Ascending aorta (tissue), 2 donors: ENCODE measurements at regions of chr6 and their contacts with region 1.

Region 1: GRCh38 chr6:163413345-163414116 is 987 bp upstream of the QKI start:
- DNase-seq: peak; percentile 44 to 91
- H3K4me3 ChIP-seq: peak overlapping the region; percentile 98 to 100
- H3K27ac ChIP-seq: peak overlapping the region; percentile 98 to 100
- H3K4me1 ChIP-seq: peaks cover 0 to under 1% of the 10 kb centered on the region in 2 donors
- H3K27me3 ChIP-seq: no peaks in the 10 kb centered on the region
- CTCF ChIP-seq: peak in 1 of 3 experiments; percentile 4

Region 2: GRCh38 chr6:162306616-162307015 is 1106.9 kb before region 1 on chr6:
- intact Hi-C with region 1: no loop called
- DNase-seq: no peak
- H3K4me3 ChIP-seq: no peak overlapping the region
- H3K27ac ChIP-seq: no peak overlapping the region
- H3K4me1 ChIP-seq: no peaks in the 10 kb centered on the region
- H3K27me3 ChIP-seq: no peaks in the 10 kb centered on the region
- CTCF ChIP-seq: no peak

Region 3: GRCh38 chr6:162727309-162728182 is 686.0 kb before region 1 on chr6 and contains the starts of genes PACRG and PRKN:
- intact Hi-C with region 1: loop called (anchors 10 kb)
- DNase-seq: peak; percentile 94 to 100
- H3K4me3 ChIP-seq: peak within 1 kb of the TSS; percentile 74 to 100
- H3K27ac ChIP-seq: peak within 1 kb of the TSS; percentile 76 to 77
- H3K4me1 ChIP-seq: peaks cover 0 to 3% of the 10 kb centered on the region in 2 donors
- H3K27me3 ChIP-seq: no peaks in the 10 kb centered on the region
- CTCF ChIP-seq: no peak
- total RNA-seq, gene PACRG: not detected
- total RNA-seq, gene PRKN: 2.6 TPM

Region 4: DNA sequence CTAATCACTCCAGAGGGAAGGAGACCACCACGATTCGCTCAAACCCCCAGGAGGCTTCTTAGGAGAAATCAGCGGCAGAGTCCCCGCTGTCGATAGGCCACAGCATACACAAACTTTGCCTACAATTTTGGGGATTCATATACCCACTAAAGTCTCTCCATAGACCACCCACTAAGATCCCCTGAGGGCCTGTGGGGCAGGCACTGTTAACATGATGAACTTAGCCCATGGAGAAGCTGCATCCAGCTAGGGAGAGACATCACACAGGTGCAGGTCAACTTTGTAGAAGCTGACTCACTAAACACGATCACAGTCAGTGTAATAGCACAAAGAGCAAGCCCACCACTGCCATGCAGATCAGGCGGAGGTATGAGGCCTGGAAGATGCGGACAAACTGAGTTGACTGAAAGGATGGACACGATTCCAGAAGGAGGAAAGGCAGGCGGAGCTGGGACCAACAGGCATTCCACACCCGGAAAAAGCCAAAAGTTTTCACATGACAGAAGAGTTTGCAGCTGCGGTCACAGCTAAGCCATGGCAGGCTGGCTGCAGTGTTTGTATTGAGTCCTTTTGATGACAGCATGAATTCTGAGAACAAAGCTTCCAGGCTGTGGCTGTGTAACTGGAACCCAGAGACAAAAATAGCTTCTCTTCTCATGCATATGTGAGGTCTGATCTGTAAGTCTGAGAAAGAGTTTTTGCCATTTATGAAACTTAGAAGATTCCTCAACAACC is 74.7 kb before region 1 on chr6:
- intact Hi-C with region 1: loop called (anchors 2 kb)
- DNase-seq: no peak
- H3K4me3 ChIP-seq: no peak overlapping the region
- H3K27ac ChIP-seq: peak overlapping the region; percentile 1 to 30
- H3K4me1 ChIP-seq: peaks cover 3 to 13% of the 10 kb centered on the region in 2 donors
- H3K27me3 ChIP-seq: no peaks in the 10 kb centered on the region
- CTCF ChIP-seq: no peak

Region 5: DNA sequence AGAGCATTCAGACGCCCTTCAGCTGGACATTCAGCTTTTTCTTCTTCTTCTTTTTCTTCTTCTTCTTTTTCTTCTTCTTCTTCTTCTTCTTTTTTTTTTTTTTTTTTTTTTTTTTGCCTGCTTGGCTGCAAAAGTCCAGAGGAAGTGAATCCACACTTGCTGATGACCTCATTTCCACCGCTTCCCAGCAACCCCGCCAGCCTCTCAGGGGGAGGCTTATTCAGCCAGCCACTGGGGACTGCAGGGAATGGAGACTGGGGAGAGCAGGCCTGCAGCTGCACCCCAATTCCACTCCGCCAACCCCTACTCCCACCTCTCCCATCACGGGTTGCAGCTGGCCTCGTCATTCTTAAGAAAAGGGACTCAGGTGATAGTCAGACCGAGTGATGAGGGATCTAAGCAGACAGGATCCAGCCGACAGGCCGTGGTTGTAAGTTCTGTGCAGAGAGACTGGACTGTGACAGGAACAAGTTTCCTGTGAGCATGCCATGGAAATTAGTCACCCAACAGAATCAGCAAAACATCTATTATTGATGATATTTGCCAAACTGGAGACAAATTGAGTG is 58.0 kb before region 1 on chr6:
- intact Hi-C with region 1: loop called (anchors 5 kb)
- DNase-seq: peak in 1 of 2 donors; percentile 78
- H3K4me3 ChIP-seq: peak overlapping the region in 1 of 2 donors; percentile 38
- H3K27ac ChIP-seq: peak overlapping the region; percentile 51 to 59
- H3K4me1 ChIP-seq: peaks cover 0 to 6% of the 10 kb centered on the region in 2 donors
- H3K27me3 ChIP-seq: no peaks in the 10 kb centered on the region
- CTCF ChIP-seq: no peak

Region 6: DNA sequence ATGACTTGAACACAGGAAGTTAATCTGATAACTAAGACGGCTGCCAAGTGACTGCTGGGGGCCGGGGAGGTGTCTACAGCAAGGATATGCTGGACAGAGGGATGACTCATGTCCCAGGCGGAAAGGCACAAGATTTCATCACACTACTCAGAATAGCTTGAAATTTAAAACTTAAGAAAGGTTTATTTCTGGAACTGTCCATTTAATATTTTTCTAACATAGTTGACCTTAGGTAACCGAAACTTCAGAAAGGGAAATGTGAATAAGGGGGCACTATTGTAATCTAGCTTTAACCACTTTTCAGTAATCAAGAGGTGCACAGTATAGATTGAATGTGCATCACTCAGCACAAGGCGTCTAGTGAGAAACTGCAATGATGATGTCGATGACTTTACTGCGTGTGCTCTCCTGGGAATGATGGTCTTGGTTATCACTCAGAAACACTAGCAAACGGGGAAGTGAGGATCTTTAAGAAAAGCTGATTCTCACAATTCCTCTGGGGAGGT is 172.5 kb after region 1 on chr6:
- intact Hi-C with region 1: loop called (anchors 5 kb)
- DNase-seq: peak in 1 of 2 donors; percentile 82
- H3K4me3 ChIP-seq: no peak overlapping the region
- H3K27ac ChIP-seq: no peak overlapping the region
- H3K4me1 ChIP-seq: peaks cover 4 to 5% of the 10 kb centered on the region in 2 donors
- H3K27me3 ChIP-seq: no peaks in the 10 kb centered on the region
- CTCF ChIP-seq: no peak

Region 7: GRCh38 chr6:163956571-163957407 is 543.3 kb after region 1 on chr6:
- intact Hi-C with region 1: loop called (anchors 5 kb)
- DNase-seq: peak; percentile 43 to 84
- H3K4me3 ChIP-seq: no peak overlapping the region
- H3K27ac ChIP-seq: no peak overlapping the region
- H3K4me1 ChIP-seq: no peaks in the 10 kb centered on the region
- H3K27me3 ChIP-seq: no peaks in the 10 kb centered on the region
- CTCF ChIP-seq: peak; percentile 71 to 81 (median 80)

Region 8: DNA sequence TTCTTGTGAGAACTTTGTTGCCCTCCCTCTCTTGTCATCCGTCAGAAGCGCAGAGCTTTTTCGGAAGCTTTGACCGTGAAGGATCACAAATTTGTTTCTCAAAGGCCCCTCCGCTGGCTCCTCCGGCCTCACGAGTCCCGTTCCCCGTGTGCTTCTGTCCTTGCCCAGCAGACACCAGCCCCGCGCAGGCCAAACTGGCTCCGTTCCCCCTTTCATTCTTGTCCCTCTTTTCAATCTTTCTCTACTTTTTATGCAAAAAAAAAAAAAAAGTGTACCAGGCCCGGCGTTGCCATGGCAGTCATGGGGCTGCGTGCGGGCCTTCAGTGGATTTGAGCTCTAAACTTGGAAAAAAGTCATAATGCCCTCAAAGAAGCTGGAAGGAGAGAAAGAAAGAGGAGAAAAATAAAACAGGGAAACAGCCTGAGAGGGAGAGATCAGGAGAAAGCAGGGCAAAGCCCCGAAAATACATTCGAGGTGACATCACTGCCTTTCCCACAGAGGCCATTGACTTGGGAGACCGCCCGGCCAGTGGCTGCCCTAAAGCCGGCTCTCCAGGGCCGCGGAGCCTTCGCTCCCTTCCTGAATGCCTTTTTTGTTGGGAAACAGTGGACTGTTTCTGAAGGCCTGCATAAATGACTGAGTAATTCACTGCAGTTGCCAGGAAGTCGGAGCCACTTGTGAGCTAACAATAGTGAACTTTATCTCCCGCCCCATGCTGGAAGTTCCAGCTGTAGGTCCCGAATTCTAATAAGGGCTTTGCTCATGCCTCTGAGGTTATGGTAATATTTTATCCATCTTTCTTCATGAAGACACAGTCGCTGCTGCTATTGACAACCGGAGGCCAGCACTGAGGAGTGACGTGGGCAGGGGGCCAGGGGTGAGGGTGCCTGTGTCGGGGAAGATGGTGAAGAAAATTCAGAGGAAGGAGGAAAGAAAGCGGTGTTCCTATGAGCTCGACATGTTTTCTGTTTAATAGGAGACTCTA is 671.9 kb after region 1 on chr6:
- intact Hi-C with region 1: loop called (anchors 2 kb)
- DNase-seq: peak; percentile 53 to 91
- H3K4me3 ChIP-seq: peak overlapping the region in 1 of 2 donors; percentile 62
- H3K27ac ChIP-seq: peak overlapping the region; percentile 93 to 96
- H3K4me1 ChIP-seq: peaks cover 0 to 12% of the 10 kb centered on the region in 2 donors
- H3K27me3 ChIP-seq: no peaks in the 10 kb centered on the region
- CTCF ChIP-seq: no peak